PC-9 (cell line): ENCODE measurements at regions of chr5 and their contacts with region 1.

Region 1: GRCh38 chr5:8299716-8300115 is 430.8 kb downstream of the MTRR start:
- DNase-seq: no peak
- H3K4me3 ChIP-seq: no peak overlapping the region
- H3K27ac ChIP-seq: no peak overlapping the region
- H3K4me1 ChIP-seq: no peaks in the 10 kb centered on the region
- H3K27me3 ChIP-seq: no peaks in the 10 kb centered on the region
- CTCF ChIP-seq: no peak

Region 2: GRCh38 chr5:6856653-6857052 is 1443.1 kb before region 1 on chr5:
- CTCF ChIA-PET with region 1: interaction called, 10 read pairs
- POLR2A ChIA-PET with region 1: no interaction called
- intact Hi-C with region 1: no loop called
- DNase-seq: no peak
- H3K4me3 ChIP-seq: no peak overlapping the region
- H3K27ac ChIP-seq: no peak overlapping the region
- H3K4me1 ChIP-seq: no peaks in the 10 kb centered on the region
- H3K27me3 ChIP-seq: peaks cover 90% of the 10 kb centered on the region
- CTCF ChIP-seq: no peak